HEK293 (cell line): ENCODE measurements at regions of chr4 and their contacts with region 1.

Region 1: GRCh38 chr4:127880764-127881562 is at the start of gene PLK4:
- H3K4me3 ChIP-seq: peak within 1 kb of the TSS; percentile 96
- H3K27ac ChIP-seq: peak within 1 kb of the TSS; percentile 96
- H3K4me1 ChIP-seq: no peaks in the 10 kb centered on the region; the same call in 1 of the 2 replicates
- CTCF ChIP-seq: 0 out of 2 replicates have a peak, but pooled peaks have one; percentile 4

Region 2: GRCh38 chr4:128060699-128061565 is 180.0 kb after region 1 on chr4 and contains the start of gene LARP1B:
- CTCF ChIA-PET with region 1: no interaction called
- POLR2A ChIA-PET with region 1: interaction called, 19 read pairs
- H3K4me3 ChIP-seq: peak within 1 kb of the TSS; percentile 77
- H3K27ac ChIP-seq: peak within 1 kb of the TSS; percentile 92
- H3K4me1 ChIP-seq: no peaks in the 10 kb centered on the region
- CTCF ChIP-seq: no peak